GM10248 (cell line): ENCODE measurements at regions of chr4 and their contacts with region 1.

Region 1: DNA sequence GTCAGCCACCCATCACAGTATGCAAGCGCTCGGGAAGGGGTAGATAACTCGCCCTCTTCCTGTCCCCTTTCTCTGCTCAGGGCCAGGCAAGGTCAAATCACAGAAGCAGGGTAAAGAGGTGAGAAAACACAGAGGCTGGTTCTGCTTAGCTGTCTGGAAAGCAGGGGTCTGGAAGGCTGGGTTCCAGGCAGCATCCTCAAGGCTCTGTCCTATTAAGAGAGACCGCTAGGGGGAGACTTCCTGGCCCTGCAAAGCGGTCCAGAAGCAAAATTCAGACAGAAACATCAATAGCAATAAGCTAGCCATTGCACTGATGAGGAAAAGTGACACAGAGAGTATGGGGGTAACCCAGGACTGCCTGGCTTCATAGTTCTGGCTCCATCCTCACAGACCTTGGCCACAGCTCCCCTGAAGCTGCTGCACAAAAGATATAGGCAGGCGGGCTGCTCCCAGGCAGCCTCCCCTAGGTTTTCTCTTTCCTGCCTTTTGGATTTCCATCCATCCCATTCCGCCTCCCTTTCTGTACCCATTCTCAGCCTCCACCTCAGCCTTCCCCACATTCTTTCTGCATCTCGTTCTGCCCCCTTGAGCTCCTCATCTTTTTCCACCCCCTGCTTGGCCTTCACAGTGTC is 308.5 kb downstream of the EVC2 start:
- DNase-seq: peak; percentile 32
- CTCF ChIP-seq: peak; percentile 26

Region 2: DNA sequence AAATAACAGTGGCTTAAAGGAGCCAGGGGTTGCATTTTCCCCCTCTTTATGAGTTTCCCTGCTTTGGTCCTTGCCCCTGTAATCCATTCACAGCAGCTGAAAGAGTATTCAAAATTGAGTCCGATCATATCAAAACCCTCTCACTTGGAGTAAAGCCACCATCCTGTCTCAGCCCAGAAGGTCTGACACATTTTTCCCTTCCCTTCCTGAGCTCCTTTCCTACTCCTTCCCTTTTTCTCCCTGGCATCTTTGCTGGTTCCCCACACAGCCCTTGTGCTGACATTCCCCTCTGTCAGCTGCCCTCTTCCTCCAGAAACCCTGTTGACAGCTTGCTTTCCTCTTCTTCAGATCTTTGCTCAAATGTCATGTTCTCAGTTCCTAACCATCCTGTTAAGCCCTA is 12.8 kb after region 1 on chr4:
- CTCF ChIA-PET with region 1: interaction called, 10 read pairs
- POLR2A ChIA-PET with region 1: no interaction called
- DNase-seq: no peak
- CTCF ChIP-seq: no peak

Region 3: DNA sequence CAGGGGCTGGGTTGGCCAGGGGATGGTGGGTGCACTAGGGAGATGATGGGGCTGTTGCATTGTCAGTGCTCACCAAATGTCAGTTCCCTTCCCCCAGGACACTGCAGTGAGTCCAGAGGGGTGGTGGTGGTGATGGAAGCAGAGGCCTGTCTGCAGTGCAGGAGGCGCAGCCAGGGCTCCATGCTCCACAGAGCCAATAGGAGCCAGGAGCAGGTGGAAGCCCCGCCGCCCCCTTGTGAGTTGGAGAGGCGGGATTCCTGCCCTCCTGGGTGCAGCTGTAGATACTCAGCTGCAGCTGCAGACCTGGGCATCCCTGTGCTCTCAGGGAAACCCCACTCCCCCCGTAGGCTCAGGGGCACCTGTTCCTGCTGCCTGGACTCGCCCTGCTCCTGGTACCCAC is 23.8 kb after region 1 on chr4:
- CTCF ChIA-PET with region 1: no interaction called
- POLR2A ChIA-PET with region 1: no interaction called
- DNase-seq: no peak
- CTCF ChIP-seq: no peak